ENCODE measurements at regions of chr13 and their contacts with region 1.

Region 1: GRCh38 chr13:31199849-31200636 is at the start of gene B3GLCT:
- DNase-seq: peak; percentile 53 to 96 (median 72)

Region 2: GRCh38 chr13:31161828-31162590 is 38.0 kb before region 1 on chr13 and contains the start of gene HSPH1:
- intact Hi-C with region 1: loop called (anchors 1 kb)
- DNase-seq: peak; percentile 95 to 100 (median 98)

Region 3: GRCh38 chr13:31213651-31214289 is 13.7 kb after region 1 on chr13:
- intact Hi-C with region 1: no loop called
- DNase-seq: no peak